Ovary (tissue), 10 donors: ENCODE measurements at regions of chr11 and their contacts with region 1.

Region 1: DNA sequence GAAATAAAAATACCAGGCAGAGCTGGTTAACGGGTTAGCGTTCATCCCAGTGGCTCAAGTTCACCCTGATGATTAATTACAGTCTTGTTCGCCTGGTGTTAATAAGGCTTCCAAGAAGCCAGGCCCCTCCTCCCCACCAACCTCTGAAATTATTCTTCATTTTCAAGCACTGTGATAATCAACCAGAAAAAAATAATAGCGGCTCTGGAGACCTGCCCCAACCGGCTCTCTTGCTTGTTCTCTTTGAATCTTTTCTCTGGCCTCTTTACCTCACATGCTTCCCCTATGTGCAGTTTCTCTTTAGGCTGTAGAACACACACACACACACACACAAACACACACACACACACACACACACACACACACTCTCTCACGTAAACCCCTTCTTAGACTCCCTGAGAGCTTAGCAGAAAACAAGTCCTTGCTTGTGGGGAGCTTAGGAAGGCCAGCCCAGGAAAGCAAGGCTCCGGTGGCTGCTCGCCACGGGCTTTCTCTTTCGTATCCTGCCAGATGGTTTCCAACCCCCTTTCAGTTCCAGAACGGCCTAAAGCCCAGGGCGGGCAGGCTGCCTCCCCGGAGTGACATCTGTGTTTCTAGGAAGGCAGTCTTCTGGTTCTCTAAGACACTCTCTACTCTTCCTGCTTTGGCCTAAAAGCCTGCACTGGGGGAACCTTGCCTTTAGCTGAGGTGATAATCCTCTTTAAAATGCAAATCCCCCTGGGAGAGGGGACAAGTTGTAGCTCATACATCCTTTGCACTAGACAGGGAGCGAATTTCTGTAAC is 106.4 kb upstream of the SESN3 start:
- DNase-seq: peak; percentile 58 to 80 (median 72)
- H3K4me3 ChIP-seq: no peak overlapping the region
- H3K27ac ChIP-seq: peak overlapping the region; percentile 46 to 85
- H3K4me1 ChIP-seq: peaks cover 16% of the 10 kb centered on the region
- H3K27me3 ChIP-seq: no peaks in the 10 kb centered on the region
- CTCF ChIP-seq: no peak
- EP300 ChIP-seq: no peak
- POLR2A ChIP-seq: no peak

Region 2: DNA sequence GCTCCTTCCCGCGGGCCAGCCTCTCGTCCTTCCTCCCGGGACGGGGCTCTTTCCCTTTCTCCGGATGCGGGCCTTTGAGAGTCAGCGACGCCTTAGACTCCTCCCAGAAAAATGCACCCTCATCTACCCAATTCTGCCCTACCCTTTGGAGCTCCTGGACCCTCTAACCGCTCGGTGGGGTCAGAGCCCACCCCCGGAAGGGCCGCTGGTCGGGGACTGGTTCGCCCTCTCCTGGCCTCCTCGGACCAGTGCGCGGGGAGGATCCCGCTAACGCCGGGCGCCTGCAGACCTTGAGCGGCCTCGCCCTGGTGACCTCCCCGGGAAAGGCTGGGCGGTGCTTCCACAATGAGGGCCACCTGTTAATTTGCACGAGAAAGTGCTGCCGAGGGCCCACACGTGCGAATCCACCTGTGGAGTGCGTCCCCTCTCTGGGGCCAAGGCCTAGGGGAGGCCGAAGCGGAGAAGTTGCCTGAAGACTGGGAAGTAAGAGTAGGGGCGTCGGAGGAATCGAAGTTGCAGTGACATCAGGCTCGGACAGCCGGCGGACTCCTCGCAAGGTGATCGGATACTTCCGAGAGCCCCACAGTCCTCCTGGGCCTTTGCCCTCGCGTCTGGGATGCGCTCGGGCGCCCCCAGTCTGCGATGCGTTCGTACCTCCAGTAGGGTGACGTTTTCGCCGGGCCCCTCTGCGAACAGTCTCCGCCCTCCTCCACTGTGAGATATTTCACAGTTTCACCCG is 186.3 kb before region 1 on chr11:
- intact Hi-C with region 1: no loop called
- DNase-seq: peak; percentile 92 to 95 (median 94)
- H3K4me3 ChIP-seq: peak overlapping the region; percentile 67
- H3K27ac ChIP-seq: peak overlapping the region; percentile 65 to 82
- H3K4me1 ChIP-seq: peaks cover 6% of the 10 kb centered on the region
- H3K27me3 ChIP-seq: no peaks in the 10 kb centered on the region
- CTCF ChIP-seq: peak; percentile 90 to 96 (median 93)
- EP300 ChIP-seq: no peak
- POLR2A ChIP-seq: peak; percentile 75

Region 3: GRCh38 chr11:95231127-95231880 is 106.1 kb before region 1 on chr11 and contains the start of gene SESN3:
- intact Hi-C with region 1: loop called in 2 of 4 experiments (anchors 2 to 5 kb)
- DNase-seq: peak; percentile 98 to 99 (median 98)
- H3K4me3 ChIP-seq: peak within 1 kb of the TSS; percentile 89
- H3K27ac ChIP-seq: peak within 1 kb of the TSS; percentile 89 to 90
- H3K4me1 ChIP-seq: peaks cover 3% of the 10 kb centered on the region
- H3K27me3 ChIP-seq: no peaks in the 10 kb centered on the region
- CTCF ChIP-seq: peak in 2 of 3 donors; percentile 23 to 34
- EP300 ChIP-seq: no peak
- POLR2A ChIP-seq: peak; percentile 73
- total RNA-seq, gene SESN3: 37.1 to 77.3 (median 49.4) TPM